Ascending aorta (tissue), 2 donors: ENCODE measurements at regions of chr11 and their contacts with region 1.

Region 1: DNA sequence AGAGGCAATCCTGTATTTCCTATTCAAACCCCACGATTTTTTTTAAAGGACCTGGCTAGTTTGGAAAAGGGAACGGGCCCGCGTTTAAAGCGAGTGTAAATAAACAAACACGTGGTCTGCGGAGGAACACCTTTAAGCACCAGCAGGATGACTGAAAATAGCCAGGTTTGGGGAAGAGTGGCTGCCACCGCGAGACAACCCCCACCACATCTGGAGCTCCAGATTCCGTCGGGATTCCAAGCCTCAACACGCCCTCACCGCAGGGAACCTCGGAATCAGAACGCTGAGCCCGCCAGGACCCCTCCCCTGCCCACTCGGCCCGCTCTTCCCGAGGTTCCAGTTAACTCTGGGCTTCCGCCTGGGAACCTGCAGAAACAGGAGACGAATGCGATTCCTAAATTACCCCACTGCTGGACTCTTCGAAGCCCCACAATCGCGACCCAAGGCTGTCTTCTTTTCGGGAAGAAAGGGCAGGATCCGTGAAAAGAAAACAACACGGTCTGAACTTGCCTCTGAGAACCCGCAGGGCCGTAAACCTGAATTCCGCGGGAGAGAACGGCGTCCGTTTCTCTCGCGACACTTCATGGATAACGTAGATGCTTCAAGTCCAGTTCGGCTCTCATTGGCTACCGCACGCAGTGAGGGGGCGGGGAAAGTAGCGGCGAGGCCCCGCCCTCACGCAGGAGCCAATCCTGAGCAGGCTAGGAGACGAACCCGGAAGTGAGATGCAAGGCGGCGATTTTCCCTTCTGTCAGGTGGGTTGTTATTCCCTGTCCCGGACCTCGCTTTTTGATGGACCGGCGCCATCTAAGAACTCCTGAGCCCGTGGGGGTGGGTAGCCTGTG is at the starts of genes ANKRD49 and MRE11:
- DNase-seq: peak; percentile 97 to 99
- H3K4me3 ChIP-seq: peak within 1 kb of the TSS; percentile 77 to 95
- H3K27ac ChIP-seq: peak within 1 kb of the TSS; percentile 83
- H3K4me1 ChIP-seq: peaks cover 0 to 20% of the 10 kb centered on the region in 2 donors
- H3K27me3 ChIP-seq: no peaks in the 10 kb centered on the region
- CTCF ChIP-seq: no peak
- total RNA-seq, gene ANKRD49: 7.0 TPM
- total RNA-seq, gene MRE11: 3.3 TPM

Region 2: GRCh38 chr11:93529707-93530467 is 963.6 kb before region 1 on chr11:
- intact Hi-C with region 1: loop called (anchors 10 kb)
- DNase-seq: no peak
- H3K4me3 ChIP-seq: no peak overlapping the region
- H3K27ac ChIP-seq: peak overlapping the region; percentile 78 to 85
- H3K4me1 ChIP-seq: peaks cover 13 to 24% of the 10 kb centered on the region in 2 donors
- H3K27me3 ChIP-seq: no peaks in the 10 kb centered on the region
- CTCF ChIP-seq: no peak

Region 3: DNA sequence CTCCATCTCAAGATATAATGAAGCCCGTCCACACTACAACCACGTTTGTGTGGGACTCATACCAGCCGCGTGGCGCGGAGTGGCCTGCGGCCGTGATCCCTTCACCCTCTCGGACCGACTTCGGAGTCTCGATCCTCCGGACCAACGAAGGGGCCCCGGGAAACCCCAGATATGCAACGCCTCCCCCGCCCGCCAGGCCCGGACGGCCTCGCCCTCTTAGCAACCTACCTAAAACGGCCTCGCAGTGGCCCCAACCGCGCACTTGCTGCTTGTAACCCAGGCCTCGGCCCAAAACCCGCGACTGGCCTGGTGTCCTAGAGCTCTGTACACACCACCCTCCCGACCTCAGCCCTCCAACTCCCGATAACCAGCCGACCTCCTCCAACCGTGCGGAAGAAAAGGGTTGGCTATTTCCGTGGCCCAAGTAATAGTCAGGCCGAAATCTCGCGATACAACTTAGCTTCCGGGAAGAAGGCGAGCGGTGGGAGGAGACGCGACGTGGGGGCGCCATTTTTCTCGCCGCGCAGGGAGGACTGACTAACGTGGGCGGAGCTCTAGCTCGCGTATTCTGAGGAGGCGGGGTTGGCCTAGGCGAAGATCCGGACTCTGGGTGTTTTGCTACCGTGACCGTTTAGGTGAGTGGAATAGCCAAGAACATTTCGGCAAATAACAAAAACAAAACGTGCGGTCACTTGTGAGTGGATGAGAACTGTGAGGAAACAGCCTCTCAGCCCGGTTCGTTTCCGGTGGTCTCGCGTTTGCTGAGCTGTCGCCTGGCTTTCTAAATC is 752.2 kb before region 1 on chr11 and contains the starts of genes C11orf54 and TAF1D:
- intact Hi-C with region 1: loop called (anchors 5 kb)
- DNase-seq: peak; percentile 91 to 99
- H3K4me3 ChIP-seq: peak within 1 kb of the TSS; percentile 88 to 91
- H3K27ac ChIP-seq: peak within 1 kb of the TSS; percentile 93 to 94
- H3K4me1 ChIP-seq: peaks cover 19 to 45% of the 10 kb centered on the region in 2 donors
- H3K27me3 ChIP-seq: no peaks in the 10 kb centered on the region
- CTCF ChIP-seq: peak in 1 of 3 experiments; percentile 6
- total RNA-seq, gene C11orf54: 3.9 TPM
- total RNA-seq, gene TAF1D: 81.1 TPM

Region 4: DNA sequence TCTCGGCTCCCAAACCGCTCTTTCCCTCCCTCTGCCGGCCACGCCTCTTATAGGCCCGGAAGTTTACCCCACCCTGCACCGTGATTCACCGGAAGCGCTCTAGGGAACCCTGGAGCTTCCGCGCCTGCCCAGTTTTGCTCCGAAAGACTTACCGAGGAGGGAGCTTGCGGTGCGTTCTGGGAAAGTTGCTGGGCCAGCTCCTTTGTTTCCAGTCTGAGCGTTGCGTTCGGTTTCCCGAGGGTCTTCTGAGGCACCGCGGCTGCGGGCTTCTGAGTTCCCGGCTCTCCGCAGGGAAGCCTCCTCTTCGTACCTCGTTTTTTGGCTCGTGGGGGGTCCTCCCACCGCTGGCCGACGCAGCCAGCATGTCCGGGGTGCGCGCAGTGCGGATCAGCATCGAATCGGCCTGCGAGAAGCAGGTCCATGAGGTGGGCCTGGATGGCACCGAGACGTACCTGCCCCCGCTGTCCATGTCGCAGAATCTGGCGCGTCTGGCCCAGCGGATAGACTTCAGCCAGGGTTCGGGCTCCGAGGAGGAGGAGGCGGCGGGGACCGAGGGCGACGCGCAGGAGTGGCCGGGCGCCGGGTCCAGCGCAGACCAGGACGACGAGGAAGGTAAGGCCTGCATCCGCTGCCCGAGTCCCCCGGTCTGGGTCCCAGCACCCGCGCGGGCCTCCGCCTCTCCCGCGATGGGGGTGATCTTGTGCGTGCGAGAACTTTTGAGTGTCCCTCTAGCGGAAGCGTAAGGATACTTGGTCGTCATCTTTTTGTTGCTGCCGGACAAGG is 709.2 kb before region 1 on chr11 and contains the start of gene MED17:
- intact Hi-C with region 1: loop called (anchors 2 kb)
- DNase-seq: peak; percentile 60 to 95
- H3K4me3 ChIP-seq: peak within 1 kb of the TSS; percentile 96 to 97
- H3K27ac ChIP-seq: peak within 1 kb of the TSS; percentile 91 to 97
- H3K4me1 ChIP-seq: peaks cover 13 to 20% of the 10 kb centered on the region in 2 donors
- H3K27me3 ChIP-seq: no peaks in the 10 kb centered on the region
- CTCF ChIP-seq: peak; percentile 33 to 47 (median 38)
- total RNA-seq, gene MED17: 12.6 TPM

Region 5: GRCh38 chr11:94134651-94135512 is 358.6 kb before region 1 on chr11:
- intact Hi-C with region 1: loop called (anchors 5 kb)
- DNase-seq: peak; percentile 71 to 94
- H3K4me3 ChIP-seq: peak overlapping the region; percentile 18 to 43
- H3K27ac ChIP-seq: peak overlapping the region; percentile 90 to 96
- H3K4me1 ChIP-seq: peaks cover 6 to 50% of the 10 kb centered on the region in 2 donors
- H3K27me3 ChIP-seq: no peaks in the 10 kb centered on the region
- CTCF ChIP-seq: no peak

Region 6: GRCh38 chr11:94543695-94544645 is 50.5 kb after region 1 on chr11 and contains the start of gene FUT4:
- intact Hi-C with region 1: loop called (anchors 2 kb)
- DNase-seq: peak; percentile 44 to 90
- H3K4me3 ChIP-seq: peak within 1 kb of the TSS; percentile 81 to 93
- H3K27ac ChIP-seq: peak within 1 kb of the TSS; percentile 97 to 100
- H3K4me1 ChIP-seq: peaks cover 7 to 14% of the 10 kb centered on the region in 2 donors
- H3K27me3 ChIP-seq: no peaks in the 10 kb centered on the region
- CTCF ChIP-seq: no peak
- total RNA-seq, gene FUT4: 3.2 TPM

Region 7: GRCh38 chr11:94910779-94911178 is 417.3 kb after region 1 on chr11:
- intact Hi-C with region 1: no loop called
- DNase-seq: no peak
- H3K4me3 ChIP-seq: no peak overlapping the region
- H3K27ac ChIP-seq: no peak overlapping the region
- H3K4me1 ChIP-seq: no peaks in the 10 kb centered on the region
- H3K27me3 ChIP-seq: no peaks in the 10 kb centered on the region
- CTCF ChIP-seq: no peak

Region 8: GRCh38 chr11:95067039-95067840 is 573.7 kb after region 1 on chr11:
- intact Hi-C with region 1: loop called (anchors 10 kb)
- DNase-seq: peak in 1 of 2 donors; percentile 93
- H3K4me3 ChIP-seq: peak overlapping the region; percentile 88 to 95
- H3K27ac ChIP-seq: peak overlapping the region; percentile 98 to 99
- H3K4me1 ChIP-seq: peaks cover 0 to 14% of the 10 kb centered on the region in 2 donors
- H3K27me3 ChIP-seq: no peaks in the 10 kb centered on the region
- CTCF ChIP-seq: peak; percentile 71 to 78 (median 73)